Vagina (tissue), 2 donors: ENCODE measurements at regions of chr19 and their contacts with region 1.

Region 1: DNA sequence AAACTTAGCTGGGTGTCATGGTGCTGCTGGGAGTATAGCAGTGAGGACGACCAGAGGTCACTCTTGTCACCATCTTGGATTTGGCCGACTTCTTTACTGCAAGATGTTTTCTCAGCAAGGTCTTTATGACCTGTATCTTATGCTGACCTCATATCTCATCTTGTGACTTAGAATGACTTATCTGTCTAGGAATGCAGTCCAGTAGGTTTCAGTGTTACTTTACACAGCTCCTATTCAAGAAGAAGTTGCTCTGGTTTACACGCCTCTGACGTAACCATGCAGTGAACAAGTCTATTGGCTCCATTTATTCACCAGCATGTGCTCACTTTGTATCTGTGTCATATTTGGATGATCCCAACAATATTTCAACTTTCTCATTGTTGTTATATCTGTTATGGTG is 26.7 kb downstream of the ZNF850 start:
- DNase-seq: no peak
- H3K4me3 ChIP-seq: no peak overlapping the region
- H3K27ac ChIP-seq: no peak overlapping the region
- H3K4me1 ChIP-seq: no peaks in the 10 kb centered on the region
- H3K27me3 ChIP-seq: no peaks in the 10 kb centered on the region
- CTCF ChIP-seq: no peak
- POLR2A ChIP-seq: no peak

Region 2: GRCh38 chr19:36876993-36877938 is 131.4 kb after region 1 on chr19:
- intact Hi-C with region 1: loop called (anchors 10 kb)
- DNase-seq: no peak
- H3K4me3 ChIP-seq: no peak overlapping the region
- H3K27ac ChIP-seq: no peak overlapping the region
- H3K4me1 ChIP-seq: no peaks in the 10 kb centered on the region
- H3K27me3 ChIP-seq: no peaks in the 10 kb centered on the region
- CTCF ChIP-seq: no peak
- POLR2A ChIP-seq: no peak